PC-9 (cell line): ENCODE measurements at regions of chr14 and their contacts with region 1.

Region 1: GRCh38 chr14:29548948-29549370 is 378.7 kb downstream of the PRKD1 start:
- DNase-seq: no peak
- H3K4me3 ChIP-seq: no peak overlapping the region
- H3K27ac ChIP-seq: no peak overlapping the region
- H3K4me1 ChIP-seq: no peaks in the 10 kb centered on the region
- H3K27me3 ChIP-seq: no peaks in the 10 kb centered on the region
- CTCF ChIP-seq: peak; percentile 65

Region 2: GRCh38 chr14:28344381-28344780 is 1204.6 kb before region 1 on chr14:
- CTCF ChIA-PET with region 1: no interaction called
- POLR2A ChIA-PET with region 1: interaction called, 10 read pairs
- intact Hi-C with region 1: no loop called
- DNase-seq: no peak
- H3K4me3 ChIP-seq: no peak overlapping the region
- H3K27ac ChIP-seq: no peak overlapping the region
- H3K4me1 ChIP-seq: no peaks in the 10 kb centered on the region
- H3K27me3 ChIP-seq: no peaks in the 10 kb centered on the region
- CTCF ChIP-seq: no peak

Region 3: GRCh38 chr14:29339494-29340172 is 209.3 kb before region 1 on chr14:
- CTCF ChIA-PET with region 1: no interaction called
- POLR2A ChIA-PET with region 1: no interaction called
- intact Hi-C with region 1: no loop called
- DNase-seq: no peak
- H3K4me3 ChIP-seq: no peak overlapping the region
- H3K27ac ChIP-seq: no peak overlapping the region
- H3K4me1 ChIP-seq: no peaks in the 10 kb centered on the region
- H3K27me3 ChIP-seq: no peaks in the 10 kb centered on the region
- CTCF ChIP-seq: no peak

Region 4: DNA sequence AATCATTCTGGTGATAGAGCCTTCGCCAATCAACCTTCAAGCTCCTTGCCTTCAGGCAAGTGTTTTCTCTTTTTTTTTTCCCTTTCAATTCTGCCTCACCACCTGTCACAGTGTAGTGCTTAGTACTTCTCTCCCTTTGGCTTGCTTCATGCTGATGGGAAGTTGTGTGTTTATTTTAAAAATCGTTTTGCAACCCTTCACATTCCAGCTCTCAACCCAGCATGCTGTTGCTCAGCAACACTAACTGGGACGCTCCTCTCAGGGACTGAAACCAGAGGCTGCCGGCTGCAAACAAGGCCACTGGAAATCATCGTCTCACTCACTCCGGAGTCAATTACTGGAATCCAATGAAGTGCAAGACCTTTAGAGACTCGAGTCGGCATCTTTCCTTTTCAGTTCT is 36.0 kb after region 1 on chr14:
- CTCF ChIA-PET with region 1: no interaction called
- POLR2A ChIA-PET with region 1: no interaction called
- intact Hi-C with region 1: no loop called
- DNase-seq: peak in 1 of 2 experiments; percentile 1
- H3K4me3 ChIP-seq: no peak overlapping the region
- H3K27ac ChIP-seq: no peak overlapping the region
- H3K4me1 ChIP-seq: no peaks in the 10 kb centered on the region
- H3K27me3 ChIP-seq: no peaks in the 10 kb centered on the region
- CTCF ChIP-seq: no peak

Region 5: GRCh38 chr14:30214461-30215090 is 665.6 kb after region 1 on chr14:
- CTCF ChIA-PET with region 1: interaction called, 3 read pairs
- POLR2A ChIA-PET with region 1: no interaction called
- intact Hi-C with region 1: loop called (anchors 2 kb)
- DNase-seq: no peak
- H3K4me3 ChIP-seq: no peak overlapping the region
- H3K27ac ChIP-seq: no peak overlapping the region
- H3K4me1 ChIP-seq: no peaks in the 10 kb centered on the region
- H3K27me3 ChIP-seq: no peaks in the 10 kb centered on the region
- CTCF ChIP-seq: peak; percentile 73

Region 6: DNA sequence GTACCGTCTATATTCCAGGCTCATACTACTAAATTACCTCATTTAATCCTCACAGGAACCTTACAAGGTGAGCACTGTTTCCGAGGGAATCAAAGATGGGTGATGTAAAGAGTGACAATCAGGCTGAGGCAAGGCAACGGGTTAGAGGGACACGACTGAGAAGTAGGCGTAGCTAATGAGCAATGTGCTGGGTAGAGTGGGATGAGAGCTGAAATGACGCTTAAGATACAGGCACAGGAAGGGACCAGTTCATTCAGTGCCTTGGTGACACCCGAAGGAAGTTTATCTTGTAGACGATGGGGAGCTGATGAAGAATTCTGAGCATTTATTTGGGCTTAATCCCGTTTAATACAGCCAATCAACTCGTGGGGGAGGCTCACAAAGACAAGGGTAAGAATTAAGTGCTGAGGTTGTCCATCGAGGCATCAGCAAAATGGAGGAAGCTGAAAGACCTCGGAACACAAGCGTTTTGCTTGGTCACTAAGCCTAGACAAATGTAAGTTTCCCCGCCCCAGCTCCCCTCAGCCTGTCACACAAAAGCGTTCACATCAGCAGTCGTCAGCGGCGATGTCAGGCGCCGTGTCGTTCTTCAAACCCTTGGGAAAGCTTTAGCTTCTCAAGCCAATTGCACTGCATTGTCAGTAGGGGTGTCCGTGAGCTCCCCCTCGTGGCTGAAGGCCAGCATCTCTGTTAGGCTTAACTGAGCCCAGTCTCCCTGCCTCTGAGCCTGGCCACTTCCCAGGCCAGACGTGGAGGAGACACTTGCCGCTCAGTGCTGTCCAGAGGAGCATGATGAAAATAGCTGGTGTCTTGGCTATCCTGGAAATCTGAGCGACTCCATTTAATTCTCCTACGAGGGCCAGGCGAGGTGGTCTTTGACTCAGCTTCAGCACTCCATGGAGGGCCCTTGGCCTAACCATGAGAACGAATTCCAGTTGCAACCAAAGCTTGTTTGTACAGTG is 721.5 kb after region 1 on chr14:
- CTCF ChIA-PET with region 1: interaction called, 3 read pairs
- POLR2A ChIA-PET with region 1: no interaction called
- intact Hi-C with region 1: loop called (anchors 5 kb)
- DNase-seq: peak; percentile 33 to 65
- H3K4me3 ChIP-seq: no peak overlapping the region
- H3K27ac ChIP-seq: no peak overlapping the region
- H3K4me1 ChIP-seq: no peaks in the 10 kb centered on the region
- H3K27me3 ChIP-seq: no peaks in the 10 kb centered on the region
- CTCF ChIP-seq: peak; percentile 72

Region 7: DNA sequence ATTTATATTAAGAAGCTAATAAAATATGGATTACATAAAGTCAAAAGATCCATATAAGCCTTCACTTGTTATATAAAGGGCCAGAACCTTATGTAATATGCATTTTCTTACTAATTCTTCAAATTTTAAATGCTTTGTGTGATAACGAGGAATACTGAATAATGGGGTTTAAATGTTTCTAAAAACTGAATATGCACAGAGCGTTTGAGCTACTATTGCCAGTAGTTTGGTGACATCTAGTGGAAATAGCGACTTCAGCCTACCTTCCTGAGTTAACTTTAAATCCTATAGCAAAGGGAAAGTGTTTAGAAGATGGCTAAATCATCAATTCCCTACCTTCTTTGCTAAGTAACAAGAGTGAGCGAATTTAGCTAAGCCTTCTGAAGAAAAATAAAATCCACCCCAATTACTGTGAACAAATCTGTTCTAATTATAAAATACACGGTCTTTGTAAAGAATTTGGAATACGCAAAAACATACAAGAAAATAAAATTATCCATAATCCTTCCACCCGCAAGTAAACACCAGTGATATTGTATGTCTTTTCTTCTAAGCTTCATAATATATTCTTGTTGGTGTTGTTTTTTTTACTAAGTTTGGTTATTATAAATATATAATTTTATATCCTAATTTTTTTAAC is 894.5 kb after region 1 on chr14:
- CTCF ChIA-PET with region 1: interaction called, 3 read pairs
- POLR2A ChIA-PET with region 1: no interaction called
- intact Hi-C with region 1: loop called (anchors 10 kb)
- DNase-seq: no peak
- H3K4me3 ChIP-seq: no peak overlapping the region
- H3K27ac ChIP-seq: no peak overlapping the region
- H3K4me1 ChIP-seq: no peaks in the 10 kb centered on the region
- H3K27me3 ChIP-seq: no peaks in the 10 kb centered on the region
- CTCF ChIP-seq: peak; percentile 65